Posterior vena cava (tissue), 2 donors: ENCODE measurements at regions of chrX and their contacts with region 1.

Region 1: GRCh38 chrX:16771483-16772398 is 14.5 kb upstream of the TXLNG start:
- DNase-seq: no peak

Region 2: DNA sequence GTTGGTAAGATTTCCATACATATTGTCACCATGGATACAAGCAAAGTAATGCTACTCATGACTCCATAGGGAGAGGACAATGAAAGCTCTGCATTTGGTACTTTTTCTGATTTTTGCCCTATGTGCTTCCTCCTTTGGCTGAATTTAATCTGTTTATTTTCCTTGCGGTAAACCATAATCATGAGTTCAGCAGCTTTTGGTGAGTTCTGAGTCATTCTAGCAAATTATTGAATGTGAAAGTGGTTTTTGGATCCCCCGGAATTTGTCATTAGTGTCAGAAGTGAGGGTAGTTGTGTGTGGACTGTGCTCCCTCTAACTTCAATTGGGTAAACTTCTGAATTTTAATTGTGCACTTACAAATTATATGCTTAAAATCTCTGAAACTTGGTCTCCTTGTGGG is 1728.2 kb before region 1 on chrX:
- intact Hi-C with region 1: loop called in 1 of 2 experiments (anchors 5 kb)
- DNase-seq: no peak

Region 3: GRCh38 chrX:16719334-16720084 is 52.2 kb before region 1 on chrX and contains the start of gene SYAP1:
- intact Hi-C with region 1: loop called in 1 of 2 experiments (anchors 10 kb)
- DNase-seq: peak; percentile 99
- total RNA-seq, gene SYAP1: 30.9 to 31.3 TPM

Region 4: DNA sequence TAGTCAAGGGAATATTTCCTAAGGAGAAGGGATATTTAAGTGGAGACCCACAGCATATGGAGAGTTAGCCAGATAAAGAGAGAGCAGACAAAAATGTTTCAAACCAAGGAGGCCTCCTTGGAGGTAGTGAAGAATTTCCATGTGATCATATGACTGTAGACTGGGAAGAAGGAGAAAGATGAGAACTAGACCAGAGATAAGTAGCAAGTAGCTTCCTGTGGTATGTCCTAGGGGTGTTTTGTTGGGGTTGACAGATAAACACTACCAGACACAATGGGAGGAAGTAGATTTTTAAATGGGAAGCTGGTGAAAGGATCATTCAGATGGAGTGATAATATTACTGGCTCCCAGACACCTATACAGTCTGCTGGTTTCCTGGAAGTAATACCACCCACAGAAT is 38.7 kb before region 1 on chrX:
- intact Hi-C with region 1: no loop called
- DNase-seq: no peak